Esophagus muscularis mucosa (tissue), 4 donors: ENCODE measurements at regions of chr1 and their contacts with region 1.

Region 1: GRCh38 chr1:10121688-10122087 is 88.7 kb upstream of the KIF1B start:
- DNase-seq: no peak
- H3K4me3 ChIP-seq: no peak overlapping the region
- H3K27ac ChIP-seq: peak overlapping the region; percentile 74 to 77 (median 76)
- H3K4me1 ChIP-seq: peaks cover 5 to 55% (median 44%) of the 10 kb centered on the region in 4 donors
- H3K27me3 ChIP-seq: no peaks in the 10 kb centered on the region
- CTCF ChIP-seq: no peak
- EP300 ChIP-seq: no peak
- POLR2A ChIP-seq: no peak

Region 2: DNA sequence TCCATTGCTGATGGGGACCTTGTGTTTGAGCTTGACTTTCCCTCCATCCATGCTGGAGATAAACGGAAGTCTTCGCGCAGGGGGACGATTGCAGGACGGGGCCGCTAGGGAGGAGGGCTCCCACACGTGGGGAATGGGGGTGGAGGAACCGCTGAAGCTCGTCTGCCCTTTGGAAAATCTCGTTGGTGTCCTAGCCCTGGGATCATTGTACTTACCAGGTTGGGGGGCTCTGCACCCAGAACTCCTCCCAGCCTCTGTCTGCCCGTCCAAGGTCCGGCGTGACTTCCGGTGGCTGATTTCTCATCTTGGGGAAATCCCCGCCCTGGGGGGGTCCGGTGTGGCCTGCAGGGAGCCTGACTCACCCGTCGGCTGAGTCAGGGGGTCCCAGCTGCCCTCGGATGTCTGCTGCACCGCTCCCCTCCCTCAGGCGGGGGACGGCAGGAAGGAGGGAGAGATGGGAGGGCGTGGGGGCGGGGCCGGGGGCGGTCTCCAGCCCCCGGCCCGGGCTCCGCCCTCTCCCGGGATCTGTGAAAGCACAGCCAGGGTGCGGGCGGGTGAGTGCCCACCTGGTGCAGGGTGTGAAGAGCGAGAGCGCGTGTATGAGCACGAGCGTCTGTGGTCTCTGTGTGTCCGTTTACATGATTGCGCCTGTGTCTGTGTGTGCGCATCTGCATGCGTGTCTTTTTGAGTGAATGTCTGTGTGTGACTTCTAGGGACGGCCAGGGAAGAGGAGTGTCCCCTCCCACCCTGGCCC is 434.4 kb before region 1 on chr1:
- intact Hi-C with region 1: no loop called
- DNase-seq: no peak
- H3K4me3 ChIP-seq: peak overlapping the region; percentile 75 to 92 (median 84)
- H3K27ac ChIP-seq: peak overlapping the region; percentile 50 to 71 (median 60)
- H3K4me1 ChIP-seq: peaks cover 28 to 47% (median 37%) of the 10 kb centered on the region in 4 donors
- H3K27me3 ChIP-seq: no peaks in the 10 kb centered on the region
- CTCF ChIP-seq: peak in 1 of 3 experiments; percentile 15
- EP300 ChIP-seq: no peak
- POLR2A ChIP-seq: no peak

Region 3: DNA sequence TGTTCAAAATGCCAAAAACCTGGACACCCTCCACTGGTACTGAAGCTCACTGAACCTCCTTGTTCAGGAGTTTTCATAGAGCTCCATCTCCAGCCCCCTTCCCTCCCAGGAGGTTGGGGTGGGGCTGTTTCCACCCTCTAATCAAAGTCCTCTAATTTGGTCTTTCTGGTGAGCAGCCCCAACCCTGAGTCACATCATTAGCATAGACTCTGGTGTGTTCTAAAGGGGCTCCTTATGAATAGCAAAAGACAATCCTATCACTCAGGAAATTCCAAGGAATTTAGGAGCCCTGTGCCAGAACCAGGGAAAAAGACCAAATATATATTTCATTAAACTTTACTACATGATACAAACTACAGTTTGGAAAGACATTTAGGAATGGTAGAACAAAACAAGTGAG is 102.1 kb before region 1 on chr1:
- intact Hi-C with region 1: no loop called
- DNase-seq: no peak
- H3K4me3 ChIP-seq: no peak overlapping the region
- H3K27ac ChIP-seq: no peak overlapping the region
- H3K4me1 ChIP-seq: peaks cover 0 to 12% (median 9%) of the 10 kb centered on the region in 4 donors
- H3K27me3 ChIP-seq: no peaks in the 10 kb centered on the region
- CTCF ChIP-seq: no peak
- EP300 ChIP-seq: no peak
- POLR2A ChIP-seq: no peak

Region 4: GRCh38 chr1:10108134-10108663 is 13.5 kb before region 1 on chr1:
- intact Hi-C with region 1: loop called (anchors 2 kb)
- DNase-seq: no peak
- H3K4me3 ChIP-seq: peak overlapping the region in 3 of 4 donors; percentile 5 to 17 (median 11)
- H3K27ac ChIP-seq: peak overlapping the region; percentile 82 to 90 (median 84)
- H3K4me1 ChIP-seq: peaks cover 29 to 56% (median 46%) of the 10 kb centered on the region in 4 donors
- H3K27me3 ChIP-seq: no peaks in the 10 kb centered on the region
- CTCF ChIP-seq: no peak
- EP300 ChIP-seq: no peak
- POLR2A ChIP-seq: no peak

Region 5: GRCh38 chr1:10152709-10153284 is 31.1 kb after region 1 on chr1:
- intact Hi-C with region 1: no loop called
- DNase-seq: no peak
- H3K4me3 ChIP-seq: no peak overlapping the region
- H3K27ac ChIP-seq: peak overlapping the region in 1 of 4 donors; percentile 8
- H3K4me1 ChIP-seq: peaks cover 9 to 38% (median 34%) of the 10 kb centered on the region in 4 donors
- H3K27me3 ChIP-seq: no peaks in the 10 kb centered on the region
- CTCF ChIP-seq: peak; percentile 44 to 72 (median 61)
- EP300 ChIP-seq: no peak
- POLR2A ChIP-seq: no peak